ENCODE measurements at regions of chr10 and their contacts with region 1.

Region 1: DNA sequence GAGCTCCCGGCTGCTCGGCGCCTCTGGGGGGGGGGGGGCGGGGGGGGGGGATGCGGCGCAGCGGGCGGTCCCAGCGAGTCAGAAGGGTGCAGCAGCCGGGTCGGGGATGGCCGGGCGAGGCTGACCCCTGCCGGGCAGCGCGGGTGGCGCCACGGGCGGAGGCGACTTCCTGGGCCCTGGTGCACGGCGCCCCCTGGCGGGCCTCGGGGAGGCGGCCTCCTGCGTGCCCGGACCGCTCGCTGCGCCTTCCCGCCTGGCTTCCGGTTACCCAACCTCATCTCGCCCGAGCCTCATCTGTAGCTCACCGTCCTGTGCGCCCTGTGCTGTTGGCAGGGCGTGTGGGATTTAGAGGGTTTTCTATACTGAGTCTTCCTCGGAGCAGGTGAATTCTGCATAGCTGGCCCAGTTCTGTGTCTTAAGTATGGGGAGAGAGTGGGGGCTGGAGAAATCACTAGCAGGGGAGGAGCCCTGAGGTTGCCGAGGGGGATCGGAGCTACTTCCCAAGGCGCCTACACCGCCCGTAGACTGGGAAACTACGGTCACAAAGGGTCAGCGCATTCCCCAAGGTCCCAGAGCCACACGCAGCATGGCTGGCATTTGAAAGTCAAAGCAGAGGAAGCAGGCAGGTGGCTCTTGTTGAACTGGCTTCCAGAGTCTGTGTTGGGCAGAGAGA is 28.3 kb upstream of the WDFY4 start:
- ATAC-seq: peak; percentile 74 to 98 (median 96)
- H3K4me3 ChIP-seq: peak overlapping the region; percentile 23 to 36 (median 30)
- H3K27ac ChIP-seq: no peak overlapping the region
- H3K4me1 ChIP-seq: peaks cover 0 to 2% of the 10 kb centered on the region in 2 donors

Region 2: GRCh38 chr10:48363617-48364355 is 292.6 kb before region 1 on chr10:
- in situ Hi-C with region 1: loop called in 2 of 9 experiments (anchors 25 kb)
- ATAC-seq: peak in 4 of 8 experiments; percentile 45 to 56 (median 50)
- H3K4me3 ChIP-seq: no peak overlapping the region
- H3K27ac ChIP-seq: no peak overlapping the region
- H3K4me1 ChIP-seq: no peaks in the 10 kb centered on the region

Region 3: GRCh38 chr10:48551861-48552591 is 104.4 kb before region 1 on chr10:
- in situ Hi-C with region 1: loop called in 1 of 9 experiments (anchors 5 kb)
- ATAC-seq: peak; percentile 29 to 90 (median 62)
- H3K4me3 ChIP-seq: no peak overlapping the region
- H3K27ac ChIP-seq: no peak overlapping the region
- H3K4me1 ChIP-seq: no peaks in the 10 kb centered on the region

Region 4: DNA sequence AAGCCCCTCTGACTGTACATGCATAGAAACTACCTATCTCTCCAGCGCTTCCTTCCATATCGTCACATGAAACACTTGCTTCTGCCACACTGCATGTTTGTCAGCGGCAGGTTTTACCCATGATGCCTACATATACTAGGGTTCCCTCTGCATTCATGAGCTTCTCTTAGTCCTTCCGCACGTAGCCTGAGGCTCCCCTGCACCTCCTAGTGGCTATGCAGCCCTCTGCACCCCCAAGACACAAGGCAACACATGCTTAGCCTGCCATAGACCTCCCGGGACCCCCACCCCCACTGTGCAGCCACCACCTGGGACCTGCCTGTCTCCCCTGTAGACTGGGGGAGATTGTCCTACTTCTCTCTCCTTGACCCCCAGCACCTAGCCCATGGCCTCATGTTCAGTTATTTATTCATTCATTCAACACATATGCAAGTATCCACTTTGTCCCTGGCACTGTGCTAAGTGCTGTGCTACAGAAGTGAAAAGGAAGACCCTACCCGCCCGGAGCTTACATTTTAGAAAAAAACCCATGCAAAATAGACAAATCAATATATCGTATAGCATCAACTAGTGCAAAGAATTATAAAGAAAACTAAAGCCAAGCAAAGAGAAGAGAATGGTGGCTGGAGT is 508.3 kb after region 1 on chr10:
- in situ Hi-C with region 1: loop called in 1 of 9 experiments (anchors 25 kb)
- ATAC-seq: peak in 6 of 8 experiments; percentile 22 to 86 (median 58)
- H3K4me3 ChIP-seq: no peak overlapping the region
- H3K27ac ChIP-seq: no peak overlapping the region
- H3K4me1 ChIP-seq: no peaks in the 10 kb centered on the region

Region 5: GRCh38 chr10:49446031-49446430 is 789.7 kb after region 1 on chr10:
- in situ Hi-C with region 1: no loop called
- ATAC-seq: no peak
- H3K4me3 ChIP-seq: no peak overlapping the region
- H3K27ac ChIP-seq: no peak overlapping the region
- H3K4me1 ChIP-seq: no peaks in the 10 kb centered on the region

Region 6: GRCh38 chr10:49518982-49519578 is 862.7 kb after region 1 on chr10:
- in situ Hi-C with region 1: loop called in 2 of 9 experiments (anchors 25 kb)
- ATAC-seq: peak in 7 of 8 experiments; percentile 24 to 90 (median 50)
- H3K4me3 ChIP-seq: no peak overlapping the region
- H3K27ac ChIP-seq: no peak overlapping the region
- H3K4me1 ChIP-seq: no peaks in the 10 kb centered on the region